K562 (cell line): ENCODE measurements at regions of chr14 and their contacts with region 1.

Region 1: GRCh38 chr14:51157012-51157411 is 62.1 kb upstream of the TRIM9 start:
- DNase-seq: peak in 1 of 4 experiments; percentile 13
- ATAC-seq: peak; percentile 69
- H3K4me3 ChIP-seq: no peak overlapping the region
- H3K27ac ChIP-seq: no peak overlapping the region
- H3K4me1 ChIP-seq: no peaks in the 10 kb centered on the region
- H3K27me3 ChIP-seq: no peaks in the 10 kb centered on the region
- CTCF ChIP-seq: peak in 2 of 3 experiments; percentile 24 to 45; a peak in 2 of 6 replicates
- EP300 ChIP-seq: no peak
- POLR2A ChIP-seq: no peak
- RAD21 ChIP-seq: peak; percentile 34 to 52

Region 2: GRCh38 chr14:50906326-50907065 is 250.5 kb before region 1 on chr14:
- CTCF ChIA-PET with region 1: no interaction called
- POLR2A ChIA-PET with region 1: no interaction called
- in situ Hi-C with region 1: no loop called
- intact Hi-C with region 1: no loop called
- DNase-seq: no peak
- ATAC-seq: no peak
- H3K4me3 ChIP-seq: no peak overlapping the region
- H3K27ac ChIP-seq: no peak overlapping the region
- H3K4me1 ChIP-seq: no peaks in the 10 kb centered on the region
- H3K27me3 ChIP-seq: no peaks in the 10 kb centered on the region
- CTCF ChIP-seq: no peak
- EP300 ChIP-seq: no peak
- POLR2A ChIP-seq: no peak
- RAD21 ChIP-seq: no peak

Region 3: GRCh38 chr14:51056421-51056820 is 100.6 kb before region 1 on chr14:
- CTCF ChIA-PET with region 1: no interaction called
- POLR2A ChIA-PET with region 1: no interaction called
- in situ Hi-C with region 1: no loop called
- intact Hi-C with region 1: no loop called
- DNase-seq: no peak
- ATAC-seq: no peak
- H3K4me3 ChIP-seq: no peak overlapping the region
- H3K27ac ChIP-seq: no peak overlapping the region
- H3K4me1 ChIP-seq: no peaks in the 10 kb centered on the region
- H3K27me3 ChIP-seq: no peaks in the 10 kb centered on the region
- CTCF ChIP-seq: no peak
- EP300 ChIP-seq: no peak
- POLR2A ChIP-seq: no peak
- RAD21 ChIP-seq: no peak

Region 4: DNA sequence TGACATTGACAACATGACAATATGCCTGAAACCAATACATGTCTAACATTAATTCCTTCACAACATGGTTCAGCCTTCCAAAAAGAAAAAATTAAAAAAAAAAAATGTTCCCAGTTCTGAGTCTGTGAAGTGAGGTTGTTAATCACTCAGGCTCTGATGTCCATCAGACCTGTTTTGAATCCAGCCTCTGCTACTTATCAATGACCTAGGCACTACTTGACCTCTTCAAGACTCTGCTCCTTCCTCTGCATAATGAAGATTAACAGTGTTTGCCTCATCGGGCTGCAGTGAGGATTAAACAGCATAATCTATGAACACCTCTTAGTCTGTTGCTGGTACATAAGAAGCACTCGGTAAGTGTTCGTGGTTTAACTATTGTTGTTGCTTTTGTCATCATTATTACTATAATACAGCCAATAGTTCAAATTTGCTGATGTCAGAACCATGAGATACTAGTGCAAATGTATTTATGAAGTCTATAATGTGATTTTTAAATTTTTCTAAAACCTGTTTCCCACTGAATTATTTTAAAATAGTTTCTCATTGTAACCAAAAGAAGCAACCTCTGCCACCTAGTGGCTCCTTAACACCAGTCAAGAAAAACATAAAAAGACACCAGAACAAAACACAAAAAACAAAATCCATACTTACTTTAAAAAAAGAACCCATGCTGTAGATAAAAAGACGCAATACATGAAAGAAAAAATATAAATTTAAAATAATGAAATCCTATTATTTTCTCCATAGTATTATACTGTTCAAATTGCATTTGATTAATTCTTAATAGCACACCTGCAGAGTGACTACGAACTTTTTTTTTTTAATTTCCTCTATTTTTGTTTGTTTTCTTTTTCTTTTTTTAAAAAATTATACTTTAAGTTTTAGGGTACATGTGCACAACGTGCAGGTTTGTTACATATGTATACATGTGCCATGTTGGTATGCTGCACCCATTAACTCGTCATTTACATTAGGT is 62.7 kb after region 1 on chr14:
- CTCF ChIA-PET with region 1: no interaction called
- POLR2A ChIA-PET with region 1: no interaction called
- in situ Hi-C with region 1: no loop called
- intact Hi-C with region 1: loop called (anchors 10 kb)
- DNase-seq: peak in 2 of 4 experiments; percentile 7 to 22
- ATAC-seq: peak; percentile 54
- H3K4me3 ChIP-seq: no peak overlapping the region
- H3K27ac ChIP-seq: no peak overlapping the region
- H3K4me1 ChIP-seq: no peaks in the 10 kb centered on the region
- H3K27me3 ChIP-seq: no peaks in the 10 kb centered on the region
- CTCF ChIP-seq: peak in 2 of 3 experiments; percentile 13 to 51; a peak in 3 of 6 replicates
- EP300 ChIP-seq: no peak
- POLR2A ChIP-seq: no peak
- RAD21 ChIP-seq: peak; percentile 26 to 27; a peak in 3 of 4 replicates

Region 5: DNA sequence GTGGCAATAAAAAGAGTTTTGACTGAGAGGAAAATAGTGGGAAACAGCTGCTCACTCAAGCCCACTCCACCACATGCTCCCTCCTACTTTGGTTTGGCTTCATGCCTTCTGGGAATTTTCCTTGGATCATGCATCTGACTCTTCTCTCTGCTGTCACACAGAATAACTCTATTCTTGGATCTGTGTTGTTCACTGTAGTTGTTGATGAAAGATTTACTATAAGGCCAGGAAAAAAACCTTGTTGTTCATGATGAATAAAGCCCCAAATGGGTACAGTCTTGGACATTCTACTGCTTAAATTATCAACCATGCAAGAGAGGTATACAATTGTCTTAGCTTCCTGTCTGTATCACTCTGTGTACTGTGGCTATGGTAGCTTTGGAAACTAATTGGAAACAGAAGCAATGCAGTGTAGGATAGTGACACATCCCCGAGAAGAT is 153.5 kb after region 1 on chr14:
- CTCF ChIA-PET with region 1: no interaction called
- POLR2A ChIA-PET with region 1: no interaction called
- in situ Hi-C with region 1: no loop called
- intact Hi-C with region 1: no loop called
- DNase-seq: no peak
- ATAC-seq: no peak
- H3K4me3 ChIP-seq: no peak overlapping the region
- H3K27ac ChIP-seq: no peak overlapping the region
- H3K4me1 ChIP-seq: no peaks in the 10 kb centered on the region
- H3K27me3 ChIP-seq: no peaks in the 10 kb centered on the region
- CTCF ChIP-seq: no peak
- EP300 ChIP-seq: no peak
- POLR2A ChIP-seq: no peak
- RAD21 ChIP-seq: no peak